Posterior vena cava (tissue), 2 donors: ENCODE measurements at regions of chr9 and their contacts with region 1.

Region 1: DNA sequence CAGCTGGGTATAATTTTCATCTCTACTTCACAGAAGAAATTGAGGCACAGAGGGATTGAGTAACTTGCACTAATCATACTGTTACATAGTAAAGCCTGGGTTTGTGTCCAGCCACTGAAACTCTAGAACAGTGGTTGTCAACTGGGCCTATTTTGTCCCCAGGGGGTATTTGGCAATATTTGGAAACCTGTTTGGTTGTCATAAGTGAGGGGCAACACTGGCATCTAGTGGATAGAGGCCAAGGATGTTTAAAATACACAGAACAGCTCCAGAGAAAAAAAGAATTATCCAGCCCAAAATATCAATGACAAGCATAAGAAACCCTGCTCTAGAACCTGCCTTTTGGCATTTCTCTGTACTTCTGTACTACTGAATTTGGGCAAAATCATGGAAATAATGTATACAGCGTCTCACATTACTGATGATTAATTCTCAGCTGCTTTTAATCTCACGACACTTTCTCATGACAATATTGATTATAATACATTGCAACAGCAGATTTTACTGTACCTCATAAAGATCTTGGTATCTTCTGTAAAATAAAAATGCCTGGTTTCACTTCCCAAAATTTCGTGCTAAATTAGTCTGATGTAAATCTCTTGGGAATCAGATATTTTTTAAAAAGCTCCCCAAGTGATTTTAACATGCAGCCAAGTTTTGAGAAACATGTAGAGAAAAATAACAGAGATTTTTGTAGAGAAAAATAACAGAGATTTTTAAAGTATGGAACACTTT is 112.7 kb downstream of the RORB start:
- DNase-seq: no peak

Region 2: DNA sequence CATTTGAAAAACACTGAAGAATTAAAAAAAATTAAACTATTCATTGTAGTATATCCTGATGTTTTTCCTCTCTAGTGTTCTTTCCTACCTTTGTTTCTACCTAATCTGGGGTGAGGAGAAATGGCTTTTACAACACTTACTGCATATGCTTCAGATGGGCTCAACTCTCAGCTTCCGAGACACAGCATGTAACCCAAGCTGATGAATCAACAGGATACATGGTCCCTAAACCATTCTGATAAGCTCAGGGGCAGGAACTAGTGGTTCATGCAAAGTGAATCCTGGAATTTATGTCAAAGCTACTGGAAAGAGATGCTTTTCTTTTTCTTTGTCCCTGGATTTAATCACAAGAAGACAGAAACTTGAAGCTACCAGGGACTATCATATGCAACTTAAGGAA is 785.2 kb before region 1 on chr9:
- intact Hi-C with region 1: loop called in 1 of 2 experiments (anchors 10 kb)
- DNase-seq: no peak

Region 3: GRCh38 chr9:73892335-73892734 is 717.5 kb before region 1 on chr9:
- intact Hi-C with region 1: no loop called
- DNase-seq: no peak

Region 4: GRCh38 chr9:74543145-74543544 is 66.7 kb before region 1 on chr9:
- intact Hi-C with region 1: loop called in 1 of 2 experiments (anchors 10 kb)
- DNase-seq: no peak